Heart right ventricle (tissue), 16 donors: ENCODE measurements at regions of chr10 and their contacts with region 1.

Region 1: GRCh38 chr10:49407552-49408137 is 11.8 kb upstream of the DRGX start:
- DNase-seq: peak; percentile 74 to 79
- ATAC-seq: peak; percentile 63 to 85 (median 78)
- H3K4me3 ChIP-seq: no peak overlapping the region
- H3K27ac ChIP-seq: no peak overlapping the region
- H3K4me1 ChIP-seq: peaks cover 0 to 32% (median 6%) of the 10 kb centered on the region in 9 donors
- H3K27me3 ChIP-seq: peaks cover 0 to 30% (median 17%) of the 10 kb centered on the region in 7 donors
- CTCF ChIP-seq: peak; percentile 66 to 89 (median 86)

Region 2: GRCh38 chr10:49379596-49380410 is 27.8 kb before region 1 on chr10:
- intact Hi-C with region 1: loop called in 1 of 10 experiments (anchors 1 kb)
- DNase-seq: no peak
- ATAC-seq: peak in 3 of 8 donors; percentile 45 to 58 (median 50)
- H3K4me3 ChIP-seq: no peak overlapping the region
- H3K27ac ChIP-seq: no peak overlapping the region
- H3K4me1 ChIP-seq: no peaks in the 10 kb centered on the region
- H3K27me3 ChIP-seq: peaks cover 0 to 16% (median 6%) of the 10 kb centered on the region in 7 donors
- CTCF ChIP-seq: peak in 4 of 9 donors; percentile 14 to 30 (median 26)

Region 3: GRCh38 chr10:49463605-49464004 is 56.0 kb after region 1 on chr10:
- intact Hi-C with region 1: loop called in 1 of 10 experiments (anchors 5 kb)
- DNase-seq: no peak
- ATAC-seq: no peak
- H3K4me3 ChIP-seq: no peak overlapping the region
- H3K27ac ChIP-seq: no peak overlapping the region
- H3K4me1 ChIP-seq: no peaks in the 10 kb centered on the region
- H3K27me3 ChIP-seq: no peaks in the 10 kb centered on the region
- CTCF ChIP-seq: no peak

Region 4: DNA sequence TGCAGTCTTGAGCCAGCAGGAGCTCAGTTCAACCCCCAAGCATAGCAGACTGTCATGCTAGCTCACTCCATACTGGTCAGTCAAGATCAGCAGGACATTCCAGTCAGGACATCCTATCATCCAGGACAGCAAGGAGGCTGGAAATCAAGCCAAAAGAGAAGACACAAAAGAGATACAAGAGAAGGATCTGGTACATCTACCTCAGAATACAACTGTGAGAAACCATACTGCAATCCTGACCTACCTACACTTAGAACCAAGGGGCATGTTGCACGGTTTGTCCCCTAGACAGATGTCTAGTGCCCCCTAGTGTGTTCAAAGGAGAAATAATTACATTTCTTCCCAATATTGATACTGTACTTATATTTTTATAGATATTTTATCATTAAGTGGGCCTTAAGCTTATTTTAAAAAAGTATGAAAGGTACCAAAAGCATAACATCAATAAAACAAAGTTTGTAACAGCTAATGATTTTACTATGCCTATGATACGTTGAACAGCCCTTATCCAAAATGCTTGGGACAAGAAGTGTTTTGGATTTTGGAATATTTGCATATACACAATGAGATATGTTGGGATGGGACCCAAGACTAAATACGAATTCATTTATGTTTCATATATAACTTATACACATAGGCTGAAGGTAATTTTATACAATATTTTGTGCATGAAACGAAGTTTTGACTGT is 104.6 kb after region 1 on chr10:
- intact Hi-C with region 1: loop called in 8 of 10 experiments (anchors 2 to 5 kb)
- DNase-seq: no peak
- ATAC-seq: peak in 1 of 8 donors; percentile 44
- H3K4me3 ChIP-seq: no peak overlapping the region
- H3K27ac ChIP-seq: no peak overlapping the region
- H3K4me1 ChIP-seq: peaks cover 0 to 18% (median 7%) of the 10 kb centered on the region in 9 donors
- H3K27me3 ChIP-seq: no peaks in the 10 kb centered on the region
- CTCF ChIP-seq: peak; percentile 10 to 74 (median 64)

Region 5: GRCh38 chr10:49518982-49519578 is 111.4 kb after region 1 on chr10:
- intact Hi-C with region 1: loop called in 7 of 10 experiments (anchors 2 to 5 kb)
- DNase-seq: peak in 1 of 2 donors; percentile 19
- ATAC-seq: peak in 7 of 8 donors; percentile 46 to 82 (median 66)
- H3K4me3 ChIP-seq: no peak overlapping the region
- H3K27ac ChIP-seq: no peak overlapping the region
- H3K4me1 ChIP-seq: peaks cover 0 to 30% (median 18%) of the 10 kb centered on the region in 9 donors
- H3K27me3 ChIP-seq: no peaks in the 10 kb centered on the region
- CTCF ChIP-seq: peak; percentile 51 to 75 (median 65)